CD8-positive, alpha-beta memory T cell (primary cell): ENCODE measurements at regions of chr2 and their contacts with region 1.

Region 1: DNA sequence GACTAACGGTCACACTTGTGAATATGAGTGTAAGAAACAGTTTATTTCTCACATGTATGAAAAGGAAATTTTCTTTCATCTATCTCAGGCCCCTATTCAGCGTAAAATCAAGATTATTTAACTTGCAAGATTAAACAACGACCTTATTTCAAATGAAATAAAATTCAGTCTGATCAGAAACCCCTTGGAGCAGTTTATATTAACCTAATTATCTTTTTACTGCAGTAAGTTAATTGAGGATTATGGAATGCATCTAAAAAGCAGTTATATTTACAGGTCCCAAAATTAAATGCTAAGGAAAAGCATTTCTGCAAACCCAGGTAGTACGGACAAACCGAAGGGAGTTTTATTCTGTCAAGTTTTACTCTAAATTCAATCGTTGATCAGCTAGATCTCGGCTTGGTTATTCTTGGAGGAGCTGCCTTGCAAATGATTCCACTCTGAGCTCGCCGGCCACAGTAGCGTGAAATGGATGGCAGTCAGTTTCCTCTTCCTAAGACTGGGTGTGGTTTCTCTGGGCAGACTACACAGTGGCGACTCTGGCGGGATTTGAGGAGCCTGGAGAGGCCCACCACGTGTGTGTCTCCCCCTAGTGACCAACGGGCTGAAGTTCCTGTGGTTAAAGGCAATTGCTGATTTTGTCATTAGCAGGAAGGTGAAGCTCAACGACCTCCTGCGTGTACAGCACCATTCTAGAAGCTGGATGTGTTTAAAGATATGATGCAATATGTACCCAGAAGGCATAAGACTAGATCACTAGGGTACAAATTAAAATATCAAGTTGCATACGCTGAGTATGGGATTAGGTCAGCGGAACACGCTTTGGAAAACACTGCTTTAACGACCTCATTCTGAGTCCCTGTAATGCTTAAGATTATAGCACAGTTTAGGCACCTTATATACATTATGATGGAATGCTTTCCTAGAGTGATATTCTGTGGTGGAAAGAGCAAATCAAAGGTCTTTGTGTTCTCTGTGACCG is 36.4 kb downstream of the PRKRA start:
- DNase-seq: peak; percentile 62 to 82 (median 71)
- H3K4me3 ChIP-seq: peak overlapping the region; percentile 83
- H3K4me3 Mint-ChIP-seq: peak overlapping the region; percentile 86 to 98 (median 92)
- H3K27ac ChIP-seq: peak overlapping the region; percentile 86
- H3K27ac Mint-ChIP-seq: peak overlapping the region; percentile 86 to 99 (median 96)
- H3K4me1 ChIP-seq: peaks cover 4% of the 10 kb centered on the region
- H3K4me1 Mint-ChIP-seq: peaks cover 27 to 30% (median 27%) of the 10 kb centered on the region in 3 donors
- H3K27me3 ChIP-seq: no peaks in the 10 kb centered on the region
- H3K27me3 Mint-ChIP-seq: peaks cover 0 to 2% of the 10 kb centered on the region in 2 donors

Region 2: GRCh38 chr2:178397002-178397605 is 17.5 kb before region 1 on chr2:
- CTCF ChIA-PET with region 1: interaction called, 49 read pairs
- POLR2A ChIA-PET with region 1: no interaction called
- DNase-seq: peak in 2 of 5 donors; percentile 28 to 38
- H3K4me3 ChIP-seq: no peak overlapping the region
- H3K4me3 Mint-ChIP-seq: no peak overlapping the region
- H3K27ac ChIP-seq: no peak overlapping the region
- H3K27ac Mint-ChIP-seq: no peak overlapping the region
- H3K4me1 ChIP-seq: no peaks in the 10 kb centered on the region
- H3K4me1 Mint-ChIP-seq: no peaks in the 10 kb centered on the region
- H3K27me3 ChIP-seq: no peaks in the 10 kb centered on the region
- H3K27me3 Mint-ChIP-seq: peaks cover 2 to 5% of the 10 kb centered on the region in 2 donors

Region 3: DNA sequence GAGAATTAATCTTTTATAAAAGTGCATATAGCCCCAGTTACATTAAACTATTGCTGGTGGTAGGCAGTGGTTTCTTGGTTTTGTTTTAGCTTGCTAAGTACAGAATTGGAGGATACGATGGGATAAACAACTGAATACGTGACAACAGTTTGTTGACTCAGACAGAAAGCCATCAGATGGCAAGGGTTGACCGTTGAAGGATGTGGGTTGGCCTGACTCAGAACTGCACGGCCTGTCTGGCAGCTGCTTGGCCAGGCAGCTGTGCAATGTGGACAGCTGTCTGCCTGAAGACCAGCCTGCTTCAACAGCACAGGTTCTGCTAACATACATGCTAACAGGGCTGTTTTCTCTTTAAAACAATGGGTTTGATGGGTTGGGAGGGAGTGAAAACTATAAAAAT is 10.2 kb before region 1 on chr2:
- CTCF ChIA-PET with region 1: interaction called, 49 read pairs
- POLR2A ChIA-PET with region 1: interaction called, 6 read pairs
- DNase-seq: no peak
- H3K4me3 ChIP-seq: no peak overlapping the region
- H3K4me3 Mint-ChIP-seq: no peak overlapping the region
- H3K27ac ChIP-seq: no peak overlapping the region
- H3K27ac Mint-ChIP-seq: peak overlapping the region in 3 of 8 donors; percentile 36 to 68 (median 50)
- H3K4me1 ChIP-seq: no peaks in the 10 kb centered on the region
- H3K4me1 Mint-ChIP-seq: peaks cover 4 to 12% (median 10%) of the 10 kb centered on the region in 3 donors
- H3K27me3 ChIP-seq: no peaks in the 10 kb centered on the region
- H3K27me3 Mint-ChIP-seq: peaks cover 0 to 5% of the 10 kb centered on the region in 2 donors

Region 4: DNA sequence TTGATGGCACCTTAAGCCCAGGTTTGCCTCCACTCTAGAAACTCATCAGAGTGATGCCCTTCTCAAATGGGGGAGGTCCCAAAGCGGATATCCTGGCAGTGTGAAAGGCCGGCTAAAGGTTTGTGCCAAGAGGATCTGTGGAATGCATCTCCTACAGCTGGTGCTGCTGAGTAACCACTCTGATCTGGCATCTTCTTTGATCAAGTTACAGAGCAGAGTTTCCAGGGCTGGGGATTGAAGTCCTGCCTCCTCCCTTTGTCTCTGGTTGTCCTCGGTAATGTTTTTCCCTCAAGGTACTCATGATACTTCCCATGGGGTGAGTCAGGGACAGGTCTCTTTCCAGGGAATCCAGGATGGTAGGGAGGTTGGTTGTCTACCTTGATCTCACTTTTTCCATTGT is 11.8 kb after region 1 on chr2:
- CTCF ChIA-PET with region 1: interaction called, 10 read pairs
- POLR2A ChIA-PET with region 1: no interaction called
- DNase-seq: no peak
- H3K4me3 ChIP-seq: no peak overlapping the region
- H3K4me3 Mint-ChIP-seq: no peak overlapping the region
- H3K27ac ChIP-seq: no peak overlapping the region
- H3K27ac Mint-ChIP-seq: no peak overlapping the region
- H3K4me1 ChIP-seq: no peaks in the 10 kb centered on the region
- H3K4me1 Mint-ChIP-seq: peaks cover 0 to 1% (median 0%) of the 10 kb centered on the region in 3 donors
- H3K27me3 ChIP-seq: no peaks in the 10 kb centered on the region
- H3K27me3 Mint-ChIP-seq: no peaks in the 10 kb centered on the region

Region 5: GRCh38 chr2:178450774-178451525 is 36.4 kb after region 1 on chr2 and contains the starts of genes PJVK and PRKRA:
- CTCF ChIA-PET with region 1: interaction called, 27 read pairs
- POLR2A ChIA-PET with region 1: interaction called, 25 read pairs
- DNase-seq: peak; percentile 93 to 96 (median 95)
- H3K4me3 ChIP-seq: peak within 1 kb of the TSS; percentile 64
- H3K4me3 Mint-ChIP-seq: peak within 1 kb of the TSS; percentile 86 to 96 (median 89)
- H3K27ac ChIP-seq: peak within 1 kb of the TSS; percentile 88
- H3K27ac Mint-ChIP-seq: peak within 1 kb of the TSS; percentile 91 to 97 (median 96)
- H3K4me1 ChIP-seq: peaks cover 25% of the 10 kb centered on the region
- H3K4me1 Mint-ChIP-seq: peaks cover 27 to 38% (median 31%) of the 10 kb centered on the region in 3 donors
- H3K27me3 ChIP-seq: no peaks in the 10 kb centered on the region
- H3K27me3 Mint-ChIP-seq: peaks cover 0 to 2% of the 10 kb centered on the region in 2 donors
- total RNA-seq, gene PJVK: 1.5 to 1.9 TPM
- total RNA-seq, gene PRKRA: 48.4 to 48.5 TPM

Region 6: DNA sequence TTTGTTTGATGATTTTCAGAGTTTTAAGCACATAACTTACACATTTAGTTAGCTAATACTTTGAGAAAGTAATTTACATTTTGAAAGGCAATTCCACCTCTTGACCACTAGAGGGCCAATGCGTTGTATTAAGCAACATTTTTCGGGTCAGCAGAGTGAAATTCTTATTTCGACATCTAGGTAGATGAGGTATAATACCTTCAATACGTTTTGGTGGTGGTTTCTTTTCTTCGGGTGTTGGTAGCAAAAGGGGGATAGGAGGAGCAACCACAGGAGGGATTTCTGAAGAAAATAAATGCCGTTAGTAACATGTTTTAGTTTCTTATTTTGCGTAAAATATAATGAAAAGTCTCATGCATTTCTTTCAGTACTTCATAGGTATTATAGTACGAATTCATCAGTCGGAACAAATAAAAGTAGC is 286.4 kb after region 1 on chr2:
- CTCF ChIA-PET with region 1: no interaction called
- POLR2A ChIA-PET with region 1: no interaction called
- DNase-seq: peak in 1 of 5 donors; percentile 15
- H3K4me3 ChIP-seq: no peak overlapping the region
- H3K4me3 Mint-ChIP-seq: no peak overlapping the region
- H3K27ac ChIP-seq: no peak overlapping the region
- H3K27ac Mint-ChIP-seq: no peak overlapping the region
- H3K4me1 ChIP-seq: no peaks in the 10 kb centered on the region
- H3K4me1 Mint-ChIP-seq: peaks cover 1 to 4% (median 3%) of the 10 kb centered on the region in 3 donors
- H3K27me3 ChIP-seq: no peaks in the 10 kb centered on the region
- H3K27me3 Mint-ChIP-seq: peaks cover 0 to 3% of the 10 kb centered on the region in 2 donors